Adrenal gland (tissue), 19 donors: ENCODE measurements at regions of chr6 and their contacts with region 1.

Region 1: DNA sequence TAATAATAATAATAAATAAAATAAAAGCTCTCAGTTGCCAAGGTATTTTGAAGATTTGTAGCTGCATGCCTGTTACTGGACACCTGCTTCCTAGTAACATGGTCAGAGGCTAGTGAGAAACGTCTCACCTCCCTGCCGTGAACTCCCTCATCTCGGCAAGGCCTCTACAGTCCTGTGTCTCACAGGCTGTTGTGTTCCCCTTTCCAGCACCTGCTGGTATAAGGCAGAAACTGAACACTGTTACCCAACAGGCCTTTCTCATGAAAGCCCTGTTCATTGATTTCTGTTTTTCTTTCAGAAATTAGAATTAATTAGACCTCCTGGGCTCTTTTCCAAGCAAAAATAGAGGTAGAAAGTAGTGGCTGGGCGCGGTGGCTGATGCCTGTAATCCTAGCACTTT is 17.6 kb upstream of the SRSF3 start:
- DNase-seq: no peak
- H3K4me3 ChIP-seq: no peak overlapping the region
- H3K27ac ChIP-seq: no peak overlapping the region
- H3K4me1 ChIP-seq: no peaks in the 10 kb centered on the region
- H3K27me3 ChIP-seq: no peaks in the 10 kb centered on the region
- CTCF ChIP-seq: no peak
- POLR2A ChIP-seq: no peak

Region 2: DNA sequence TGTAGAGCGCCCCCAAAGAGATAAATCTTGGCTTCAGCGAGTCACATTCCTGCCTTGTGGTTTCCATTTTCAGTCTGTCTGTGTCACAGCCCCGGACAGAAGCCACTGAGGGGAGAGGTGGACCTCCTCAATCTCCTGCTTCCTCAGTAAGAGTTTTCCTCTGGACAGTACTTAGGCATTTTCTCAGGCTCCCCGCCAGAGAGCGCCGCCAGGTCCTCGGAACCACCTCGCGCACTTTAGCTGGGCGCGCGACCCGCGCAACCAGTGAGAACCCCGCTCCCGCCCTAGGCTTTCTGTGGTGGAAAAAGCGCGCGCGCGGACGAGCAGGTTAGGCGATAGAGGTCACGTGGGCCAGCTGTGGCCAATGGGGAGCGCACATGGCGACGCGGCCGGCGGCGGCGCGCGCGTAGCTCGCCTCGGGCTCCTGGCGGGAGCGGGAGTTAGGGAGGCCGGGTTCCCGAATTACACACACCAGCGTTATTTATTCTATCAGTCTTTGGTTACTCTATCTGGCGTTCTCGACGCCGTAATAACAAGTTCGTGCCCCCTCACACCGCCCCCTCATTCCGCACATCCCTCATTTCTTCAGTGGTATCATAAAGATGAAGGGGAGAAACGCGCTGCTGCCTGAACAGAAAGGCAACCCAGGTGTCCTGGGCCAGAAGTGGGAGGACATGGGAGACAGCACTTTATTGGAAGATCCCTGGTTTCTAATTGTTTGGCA is 153.3 kb before region 1 on chr6:
- intact Hi-C with region 1: loop called in 1 of 2 experiments (anchors 10 kb)
- DNase-seq: peak; percentile 98 to 100 (median 99)
- H3K4me3 ChIP-seq: peak overlapping the region in 2 of 4 donors; percentile 44 to 70
- H3K27ac ChIP-seq: peak overlapping the region in 4 of 5 donors; percentile 40 to 84 (median 73)
- H3K4me1 ChIP-seq: peaks cover 0 to 10% of the 10 kb centered on the region in 2 donors
- H3K27me3 ChIP-seq: no peaks in the 10 kb centered on the region
- CTCF ChIP-seq: peak; percentile 20 to 75 (median 69)
- POLR2A ChIP-seq: peak; percentile 60 to 73